ENCODE measurements at regions of chr10 and their contacts with region 1.

Region 1: DNA sequence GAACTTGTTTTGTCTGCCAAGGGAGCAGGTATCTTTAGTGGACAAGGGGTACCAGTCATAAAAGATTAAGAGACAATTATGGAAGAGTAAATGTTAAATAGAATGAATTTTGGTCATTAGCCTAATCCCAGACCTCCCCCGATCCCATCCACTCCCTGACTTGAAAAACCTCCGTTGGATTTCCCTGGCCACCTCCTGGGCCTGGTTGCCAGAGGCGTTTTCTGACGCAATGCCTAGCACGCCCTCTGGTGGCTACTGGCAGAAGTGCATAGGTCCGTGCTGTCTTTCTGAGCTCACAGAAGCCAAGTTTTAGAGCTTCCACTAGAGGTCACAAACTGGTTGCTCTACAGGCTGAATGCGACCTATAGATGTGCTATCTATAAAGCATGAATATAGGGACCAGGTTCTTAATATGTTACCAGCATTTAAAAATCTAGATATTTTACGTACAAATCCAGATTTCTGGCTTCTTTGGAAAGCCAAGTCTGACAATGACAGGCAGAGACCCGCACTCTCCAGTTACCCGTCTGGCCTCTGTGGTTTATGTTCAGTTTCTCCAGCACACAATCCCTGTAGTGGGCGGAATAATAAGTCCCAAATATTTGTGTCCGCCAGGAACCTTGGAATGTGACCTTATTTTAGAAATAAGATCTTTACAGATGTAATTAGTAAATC is 39.8 kb downstream of the SPOCK2 start:
- DNase-seq: peak; percentile 93
- ATAC-seq: peak; percentile 98
- H3K4me3 Mint-ChIP-seq: no peak overlapping the region
- H3K27ac Mint-ChIP-seq: no peak overlapping the region
- H3K4me1 Mint-ChIP-seq: peaks cover 10% of the 10 kb centered on the region
- H3K27me3 Mint-ChIP-seq: no peaks in the 10 kb centered on the region

Region 2: GRCh38 chr10:71829171-71829570 is 219.4 kb before region 1 on chr10:
- CTCF ChIA-PET with region 1: no interaction called
- DNase-seq: no peak
- ATAC-seq: no peak
- H3K4me3 Mint-ChIP-seq: no peak overlapping the region
- H3K27ac Mint-ChIP-seq: no peak overlapping the region
- H3K4me1 Mint-ChIP-seq: peaks cover 7% of the 10 kb centered on the region
- H3K27me3 Mint-ChIP-seq: no peaks in the 10 kb centered on the region

Region 3: DNA sequence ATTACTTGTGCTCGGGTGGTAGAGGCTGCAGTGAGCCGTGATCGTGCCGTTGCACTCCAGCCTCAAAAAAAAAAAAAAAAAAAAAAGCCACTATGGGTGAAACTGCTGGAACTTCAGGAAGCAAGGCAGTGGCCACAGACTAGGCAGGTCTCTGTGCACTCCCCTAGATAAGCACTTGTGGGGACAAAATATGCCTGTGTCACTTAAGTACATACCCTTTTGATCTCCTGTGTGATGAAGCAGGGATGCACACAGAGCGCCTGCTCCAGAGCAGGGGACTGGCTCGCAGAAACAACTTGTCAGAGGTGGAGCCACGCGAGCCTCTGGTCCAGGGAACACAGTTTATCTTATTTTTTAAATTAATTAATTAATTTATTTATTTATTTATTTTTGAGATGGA is 154.7 kb before region 1 on chr10:
- CTCF ChIA-PET with region 1: interaction called, 25 read pairs
- DNase-seq: no peak
- ATAC-seq: no peak
- H3K4me3 Mint-ChIP-seq: no peak overlapping the region
- H3K27ac Mint-ChIP-seq: no peak overlapping the region
- H3K4me1 Mint-ChIP-seq: peaks cover 6% of the 10 kb centered on the region
- H3K27me3 Mint-ChIP-seq: peaks cover 16% of the 10 kb centered on the region

Region 4: DNA sequence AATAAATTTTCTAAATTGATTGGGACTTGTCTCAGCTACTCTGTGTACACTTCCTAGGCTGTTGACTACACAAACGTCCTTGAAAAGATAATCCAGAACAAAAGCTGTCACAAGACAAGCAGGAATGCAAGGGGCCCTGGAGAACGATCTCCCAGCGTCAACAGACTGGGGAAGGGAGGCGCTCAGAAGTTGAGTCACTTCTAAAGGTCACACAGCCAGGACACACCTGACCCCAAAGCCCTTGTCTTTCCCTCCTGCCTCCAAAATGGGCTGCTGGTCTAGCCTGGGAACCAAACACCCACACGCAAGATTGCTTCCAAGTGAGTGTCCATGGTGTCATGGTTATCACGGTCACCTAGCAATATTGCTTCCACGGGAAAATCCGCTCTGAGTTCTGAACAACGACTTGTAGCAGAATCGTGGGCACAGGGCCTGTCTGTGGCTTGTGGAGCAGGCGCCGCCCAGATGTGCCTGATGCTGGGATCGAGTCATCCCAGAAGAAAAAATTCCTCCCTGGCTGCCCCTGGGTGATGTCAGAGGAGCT is 10.1 kb before region 1 on chr10:
- CTCF ChIA-PET with region 1: interaction called, 22 read pairs
- DNase-seq: no peak
- ATAC-seq: no peak
- H3K4me3 Mint-ChIP-seq: no peak overlapping the region
- H3K27ac Mint-ChIP-seq: no peak overlapping the region
- H3K4me1 Mint-ChIP-seq: no peaks in the 10 kb centered on the region
- H3K27me3 Mint-ChIP-seq: no peaks in the 10 kb centered on the region

Region 5: DNA sequence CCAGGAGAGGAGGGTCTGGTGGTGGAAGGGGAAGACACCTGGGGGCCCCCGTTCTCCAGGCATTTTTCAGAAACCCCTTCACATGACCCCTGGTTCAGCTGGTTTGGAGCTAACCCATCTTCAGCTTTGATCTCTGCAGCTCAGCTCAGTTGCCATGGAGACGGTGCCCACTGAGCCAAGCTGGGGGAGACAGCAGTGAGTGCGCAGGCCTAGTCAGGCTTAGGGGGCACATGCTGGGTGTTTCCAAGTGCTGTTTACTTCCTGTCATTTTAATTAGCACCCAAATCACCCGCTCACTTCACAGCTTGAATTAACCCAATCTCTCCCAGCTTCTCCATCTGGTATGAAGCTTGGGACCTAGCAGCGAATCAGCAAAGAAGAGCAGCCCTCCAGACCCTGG is 30.8 kb after region 1 on chr10:
- CTCF ChIA-PET with region 1: interaction called, 18 read pairs
- DNase-seq: peak; percentile 65
- ATAC-seq: no peak
- H3K4me3 Mint-ChIP-seq: no peak overlapping the region
- H3K27ac Mint-ChIP-seq: peak overlapping the region; percentile 16
- H3K4me1 Mint-ChIP-seq: peaks cover 72% of the 10 kb centered on the region
- H3K27me3 Mint-ChIP-seq: no peaks in the 10 kb centered on the region

Region 6: GRCh38 chr10:72215652-72216549 is 167.3 kb after region 1 on chr10 and contains the starts of genes ANAPC16 and ASCC1:
- CTCF ChIA-PET with region 1: interaction called, 36 read pairs
- DNase-seq: peak; percentile 96
- ATAC-seq: peak; percentile 92
- H3K4me3 Mint-ChIP-seq: peak within 1 kb of the TSS; percentile 86
- H3K27ac Mint-ChIP-seq: peak within 1 kb of the TSS; percentile 97
- H3K4me1 Mint-ChIP-seq: peaks cover 48% of the 10 kb centered on the region
- H3K27me3 Mint-ChIP-seq: no peaks in the 10 kb centered on the region
- total RNA-seq, gene ANAPC16: 61.4 to 67.6 TPM
- total RNA-seq, gene ASCC1: 34.9 to 36.8 TPM

Region 7: GRCh38 chr10:72354478-72355213 is 306.1 kb after region 1 on chr10 and contains the start of gene DNAJB12:
- CTCF ChIA-PET with region 1: interaction called, 12 read pairs
- DNase-seq: peak; percentile 93
- ATAC-seq: peak; percentile 90
- H3K4me3 Mint-ChIP-seq: peak within 1 kb of the TSS; percentile 90
- H3K27ac Mint-ChIP-seq: peak within 1 kb of the TSS; percentile 95
- H3K4me1 Mint-ChIP-seq: peaks cover 26% of the 10 kb centered on the region
- H3K27me3 Mint-ChIP-seq: no peaks in the 10 kb centered on the region
- total RNA-seq, gene DNAJB12: 25.5 to 31.4 TPM